ENCODE measurements at regions of chr4 and their contacts with region 1.

Region 1: DNA sequence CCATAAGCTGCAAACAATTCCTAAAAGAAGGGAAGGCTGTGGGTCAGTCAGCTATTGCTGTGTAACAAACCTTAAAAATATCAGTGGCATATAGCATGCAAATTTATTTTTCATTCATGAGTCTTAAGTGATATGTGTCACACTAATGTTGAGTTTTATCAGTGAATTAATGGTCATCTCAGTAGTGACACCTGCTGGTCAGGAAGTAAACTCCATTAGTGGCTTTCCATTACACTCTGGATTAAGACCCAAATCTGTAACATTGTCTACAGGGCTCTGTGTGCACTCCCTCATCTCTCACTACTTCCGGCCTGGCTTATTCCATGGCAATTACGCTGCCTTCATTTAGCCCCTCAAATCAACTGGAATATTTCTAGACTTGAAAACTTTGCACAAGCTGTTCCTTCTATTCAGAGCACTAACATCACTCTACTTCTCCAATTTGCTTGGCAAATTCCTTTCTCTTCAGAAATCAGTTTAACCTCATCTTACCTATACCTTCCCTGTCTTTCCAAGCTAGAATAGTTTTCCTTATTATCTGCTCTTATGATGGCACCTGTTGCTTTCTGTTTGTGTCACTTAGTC is 217.3 kb upstream of the TAPT1 start:
- DNase-seq: no peak

Region 2: GRCh38 chr4:16289897-16290554 is 153.6 kb before region 1 on chr4:
- intact Hi-C with region 1: loop called in 1 of 2 experiments (anchors 10 kb)
- DNase-seq: no peak

Region 3: GRCh38 chr4:16472537-16472936 is 28.9 kb after region 1 on chr4:
- intact Hi-C with region 1: no loop called
- DNase-seq: no peak

Measured in posterior vena cava (tissue), 2 donors.